GM12878 (cell line): ENCODE measurements at regions of chr18 and their contacts with region 1.

Region 1: GRCh38 chr18:13269521-13270011 is 51.0 kb downstream of the LDLRAD4 start:
- DNase-seq: no peak
- ATAC-seq: no peak
- H3K4me3 ChIP-seq: no peak overlapping the region
- H3K27ac ChIP-seq: no peak overlapping the region
- H3K4me1 ChIP-seq: no peaks in the 10 kb centered on the region
- H3K27me3 ChIP-seq: peaks cover 4 to 5% of the 10 kb centered on the region in 2 experiments
- CTCF ChIP-seq: no peak
- EP300 ChIP-seq: no peak
- POLR2A ChIP-seq: no peak
- RAD21 ChIP-seq: no peak

Region 2: GRCh38 chr18:13151656-13152055 is 117.9 kb before region 1 on chr18:
- CTCF ChIA-PET with region 1: no interaction called
- POLR2A ChIA-PET with region 1: no interaction called
- RAD21 ChIA-PET with region 1: no interaction called
- SMC1A ChIA-PET with region 1: no interaction called
- in situ Hi-C with region 1: no loop called
- intact Hi-C with region 1: no loop called
- DNase-seq: no peak
- ATAC-seq: no peak
- H3K4me3 ChIP-seq: no peak overlapping the region
- H3K27ac ChIP-seq: no peak overlapping the region
- H3K4me1 ChIP-seq: no peaks in the 10 kb centered on the region
- H3K27me3 ChIP-seq: no peaks in the 10 kb centered on the region
- CTCF ChIP-seq: no peak
- EP300 ChIP-seq: no peak
- POLR2A ChIP-seq: no peak
- RAD21 ChIP-seq: no peak

Region 3: DNA sequence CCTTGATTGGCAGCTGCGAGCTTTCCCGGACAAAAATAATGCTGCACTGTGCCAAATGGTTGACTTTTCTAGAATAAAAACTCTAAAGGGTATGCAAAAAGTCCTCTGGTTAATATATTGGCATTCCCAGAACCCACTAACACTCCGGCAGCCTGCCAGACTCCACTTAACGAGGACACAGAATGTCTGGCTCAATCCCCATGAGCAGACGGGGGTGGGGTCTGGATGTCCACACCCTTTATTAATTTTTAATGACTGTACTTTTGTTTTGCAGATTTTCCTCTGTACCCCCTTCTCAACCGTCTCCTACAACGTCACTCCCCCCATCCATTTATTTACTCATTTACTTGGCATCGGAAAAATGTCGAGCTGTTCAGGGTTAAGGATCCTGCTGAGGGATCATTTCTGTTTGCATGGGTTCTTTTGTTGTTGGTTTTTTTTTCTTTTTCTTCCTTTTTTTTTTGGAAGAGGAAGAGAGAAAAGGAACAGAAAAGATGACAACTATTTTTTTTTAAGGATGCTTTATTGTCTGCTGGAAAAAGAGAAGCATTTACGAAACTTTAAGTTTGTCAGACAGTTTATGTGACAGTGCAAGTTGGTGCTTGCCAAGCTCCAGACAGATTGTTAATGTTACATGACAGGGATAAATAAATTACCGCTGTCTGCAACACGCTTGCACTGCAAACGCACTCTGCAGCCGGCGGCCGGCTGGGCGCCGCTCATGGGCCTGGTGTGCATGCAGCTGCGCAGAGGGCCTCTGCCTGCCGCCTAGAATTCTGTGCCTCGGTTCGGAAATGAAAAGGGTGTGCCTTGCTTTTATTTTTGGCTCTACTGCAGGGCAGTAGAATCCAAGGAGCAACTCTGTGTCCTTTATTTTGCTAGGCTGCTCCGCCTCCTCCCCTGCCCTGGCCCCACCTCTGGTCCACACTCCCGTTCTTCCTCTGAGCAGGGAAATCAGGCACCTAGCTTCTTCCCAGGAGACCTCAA is 47.4 kb before region 1 on chr18:
- CTCF ChIA-PET with region 1: no interaction called
- POLR2A ChIA-PET with region 1: no interaction called
- RAD21 ChIA-PET with region 1: no interaction called
- SMC1A ChIA-PET with region 1: no interaction called
- in situ Hi-C with region 1: no loop called
- intact Hi-C with region 1: loop called (anchors 10 kb)
- DNase-seq: no peak
- ATAC-seq: no peak
- H3K4me3 ChIP-seq: no peak overlapping the region
- H3K27ac ChIP-seq: no peak overlapping the region
- H3K4me1 ChIP-seq: no peaks in the 10 kb centered on the region
- H3K27me3 ChIP-seq: peaks cover 9% of the 10 kb centered on the region in 2 experiments
- CTCF ChIP-seq: no peak
- EP300 ChIP-seq: no peak
- POLR2A ChIP-seq: no peak
- RAD21 ChIP-seq: no peak